Activated T-helper 1 cell treated with anti-CD3 and anti-CD28 coated beads, Interleukin-12 subunit alpha, Interleukin-12 subunit beta, Interleukin-2, Interleukin-4 antibody, amounts not matched to agents 30 ng/mL and 10 ng/mL and 1 ng/mL, durations not matched to agents 14 hours and 24 hours and 36 hours (primary cell): ENCODE measurements at regions of chr5 and their contacts with region 1.

Region 1: GRCh38 chr5:119070828-119071572 is at the start of gene DMXL1:
- DNase-seq: peak; percentile 96
- H3K4me3 Mint-ChIP-seq: peak within 1 kb of the TSS; percentile 94
- H3K27ac Mint-ChIP-seq: peak within 1 kb of the TSS; percentile 98
- H3K4me1 Mint-ChIP-seq: peaks cover 36% of the 10 kb centered on the region
- H3K27me3 Mint-ChIP-seq: no peaks in the 10 kb centered on the region
- total RNA-seq, gene DMXL1: 26.7 and 28.2 TPM in 2 replicates

Region 2: DNA sequence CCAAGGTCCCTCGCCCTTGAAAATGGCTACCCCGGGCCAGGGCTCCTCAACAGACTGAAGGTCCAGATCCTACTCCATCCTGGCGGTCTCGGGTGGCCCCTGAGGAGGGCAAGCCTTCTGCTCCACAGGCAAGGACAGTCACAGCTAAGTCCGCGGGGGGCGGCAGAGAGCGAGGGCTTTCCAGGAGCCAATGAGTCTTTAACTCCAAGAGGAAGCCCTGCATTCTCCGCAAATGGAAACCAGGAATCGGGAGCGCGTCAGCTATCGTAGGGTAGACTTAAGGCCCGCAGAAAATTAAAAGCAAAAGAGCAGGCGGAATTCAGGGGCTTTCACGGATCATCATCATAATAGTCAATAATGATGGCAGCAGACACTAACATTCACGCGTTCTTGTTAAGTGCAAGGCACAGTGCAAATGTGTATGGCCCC is 197.0 kb after region 1 on chr5:
- intact Hi-C with region 1: loop called (anchors 1 kb)
- DNase-seq: peak; percentile 72
- H3K4me3 Mint-ChIP-seq: peak overlapping the region; percentile 99
- H3K27ac Mint-ChIP-seq: peak overlapping the region; percentile 97
- H3K4me1 Mint-ChIP-seq: peaks cover 55% of the 10 kb centered on the region
- H3K27me3 Mint-ChIP-seq: no peaks in the 10 kb centered on the region

Region 3: GRCh38 chr5:119287547-119288073 is 216.6 kb after region 1 on chr5:
- intact Hi-C with region 1: loop called (anchors 5 kb)
- DNase-seq: no peak
- H3K4me3 Mint-ChIP-seq: peak overlapping the region; percentile 72
- H3K27ac Mint-ChIP-seq: peak overlapping the region; percentile 93
- H3K4me1 Mint-ChIP-seq: peaks cover 99% of the 10 kb centered on the region
- H3K27me3 Mint-ChIP-seq: no peaks in the 10 kb centered on the region

Region 4: DNA sequence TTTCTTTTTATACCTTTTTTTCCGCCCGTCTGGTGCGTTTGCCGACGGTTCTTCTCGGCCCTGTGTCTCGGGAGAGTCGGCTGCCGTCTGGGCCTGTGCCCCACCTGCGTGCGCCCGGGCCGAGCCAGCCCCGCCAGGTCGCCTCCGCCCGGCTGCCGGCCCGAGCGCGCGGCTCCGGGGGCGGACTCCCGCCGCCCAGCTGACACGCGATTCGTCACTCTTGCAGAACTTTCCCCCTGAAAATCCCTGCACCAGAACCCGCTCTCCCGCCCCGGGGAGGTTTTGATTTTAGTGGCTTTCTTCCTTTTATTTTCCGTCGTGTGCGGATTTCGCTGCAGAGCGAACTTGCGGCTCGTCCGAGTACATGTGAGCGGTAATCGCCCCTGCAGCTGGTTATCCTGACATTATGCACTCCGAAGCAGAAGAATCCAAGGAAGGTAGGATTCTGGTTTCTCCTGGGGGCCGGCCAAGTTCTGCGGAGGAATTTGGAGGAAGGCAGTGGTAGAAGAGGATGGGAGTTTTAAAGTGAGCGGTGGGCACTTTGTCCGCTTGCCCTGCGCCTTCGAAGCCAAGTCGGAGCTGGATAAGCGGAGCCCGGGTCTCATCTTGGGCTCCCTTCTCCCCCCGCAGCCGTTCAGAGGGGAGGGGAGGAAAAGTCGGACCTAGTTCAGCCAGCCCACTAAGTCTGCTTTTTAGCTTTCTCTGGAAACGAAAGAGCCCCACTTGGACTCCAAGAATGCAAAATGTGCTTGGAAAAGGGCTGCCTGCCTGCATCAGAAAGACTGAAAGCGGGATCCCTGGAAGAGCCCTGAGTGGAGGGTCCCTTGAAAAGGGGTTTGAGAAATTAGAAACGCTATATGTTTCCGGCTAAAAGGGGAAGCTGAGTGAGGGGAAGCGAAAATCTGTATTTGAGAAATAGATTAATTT is 284.9 kb after region 1 on chr5 and contains the start of gene TNFAIP8:
- intact Hi-C with region 1: loop called (anchors 2 kb)
- DNase-seq: peak; percentile 64
- H3K4me3 Mint-ChIP-seq: peak within 1 kb of the TSS; percentile 95
- H3K27ac Mint-ChIP-seq: peak within 1 kb of the TSS; percentile 91
- H3K4me1 Mint-ChIP-seq: peaks cover 74% of the 10 kb centered on the region
- H3K27me3 Mint-ChIP-seq: no peaks in the 10 kb centered on the region
- total RNA-seq, gene TNFAIP8: 214 and 219 TPM in 2 replicates

Region 5: GRCh38 chr5:119411935-119412602 is 341.1 kb after region 1 on chr5:
- intact Hi-C with region 1: loop called (anchors 2 kb)
- DNase-seq: peak; percentile 36
- H3K4me3 Mint-ChIP-seq: peak overlapping the region; percentile 84
- H3K27ac Mint-ChIP-seq: peak overlapping the region; percentile 38
- H3K4me1 Mint-ChIP-seq: peaks cover 35% of the 10 kb centered on the region
- H3K27me3 Mint-ChIP-seq: peaks cover 4% of the 10 kb centered on the region